ENCODE measurements at regions of chr14 and their contacts with region 1.

Region 1: GRCh38 chr14:50762001-50762930 is 68.7 kb downstream of the NIN start:
- DNase-seq: no peak
- H3K4me3 Mint-ChIP-seq: no peak overlapping the region
- H3K27ac Mint-ChIP-seq: peak overlapping the region; percentile 63
- H3K4me1 Mint-ChIP-seq: peaks cover 21% of the 10 kb centered on the region
- H3K27me3 Mint-ChIP-seq: no peaks in the 10 kb centered on the region

Region 2: GRCh38 chr14:50667996-50668825 is 94.1 kb before region 1 on chr14 and contains the start of gene SAV1:
- intact Hi-C with region 1: loop called (anchors 2 kb)
- DNase-seq: peak; percentile 36
- H3K4me3 Mint-ChIP-seq: no peak within 1 kb of the TSS
- H3K27ac Mint-ChIP-seq: peak within 1 kb of the TSS; percentile 47
- H3K4me1 Mint-ChIP-seq: peaks cover 15% of the 10 kb centered on the region
- H3K27me3 Mint-ChIP-seq: no peaks in the 10 kb centered on the region
- total RNA-seq, gene SAV1: 13.1 and 13.5 TPM in 2 replicates

Region 3: DNA sequence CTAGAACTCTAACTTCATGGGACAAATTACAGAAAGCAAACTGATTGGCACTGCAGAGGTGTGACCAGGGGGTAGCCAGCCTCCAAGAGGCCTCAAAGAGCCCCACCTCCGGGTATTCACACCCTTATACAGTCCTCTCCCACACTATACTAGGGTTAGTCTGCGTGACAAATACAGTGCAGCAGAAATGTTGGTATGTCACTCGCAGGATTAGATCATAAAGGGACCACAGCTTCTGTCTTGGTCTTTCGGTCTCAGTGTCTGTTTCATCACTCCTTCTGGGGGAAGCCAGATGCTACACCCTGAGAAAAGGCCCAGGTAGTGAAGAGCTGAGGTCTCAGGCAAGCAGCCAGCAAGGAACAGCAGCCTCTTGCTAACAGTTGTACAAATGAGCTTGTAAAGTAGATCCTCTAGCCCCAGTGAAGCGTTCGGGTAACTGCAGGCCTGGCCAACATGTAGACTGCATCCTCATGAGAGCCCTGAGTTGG is 25.3 kb before region 1 on chr14:
- intact Hi-C with region 1: loop called (anchors 1 kb)
- DNase-seq: peak; percentile 24
- H3K4me3 Mint-ChIP-seq: no peak overlapping the region
- H3K27ac Mint-ChIP-seq: peak overlapping the region; percentile 28
- H3K4me1 Mint-ChIP-seq: peaks cover 28% of the 10 kb centered on the region
- H3K27me3 Mint-ChIP-seq: no peaks in the 10 kb centered on the region